ENCODE measurements at regions of chr5 and their contacts with region 1.

Region 1: DNA sequence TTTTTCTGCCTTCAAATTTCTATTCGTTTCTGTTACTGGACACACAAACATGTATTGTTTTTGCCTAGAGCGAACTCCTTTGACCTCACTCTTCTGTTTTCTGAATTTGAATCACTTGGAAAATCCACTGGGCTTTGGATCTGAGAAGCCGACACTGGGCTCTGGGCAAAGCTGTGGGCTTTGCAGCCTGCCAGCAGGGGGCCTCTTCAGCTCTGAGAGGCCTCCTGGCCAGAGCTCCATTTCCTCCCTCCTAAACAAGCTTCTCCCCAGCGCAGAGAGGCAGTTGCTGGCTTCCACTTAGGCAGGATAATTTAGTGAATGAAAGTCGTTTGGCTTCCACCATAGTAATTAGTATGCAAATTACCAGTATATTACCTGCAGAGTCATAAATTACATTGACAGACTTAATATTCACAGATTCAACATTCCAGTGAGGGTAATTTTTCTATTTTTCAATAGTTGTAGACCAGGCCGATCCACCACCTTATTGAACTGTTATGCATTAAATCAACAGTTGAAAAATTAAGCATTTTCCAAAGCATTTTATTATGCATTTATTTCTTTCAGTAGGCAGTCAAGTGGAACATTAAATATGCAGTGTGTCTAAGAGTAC is 104.0 kb upstream of the ZNF366 start:
- DNase-seq: peak; percentile 74
- H3K4me3 ChIP-seq: no peak overlapping the region
- H3K27ac ChIP-seq: no peak overlapping the region
- H3K4me1 ChIP-seq: peaks cover 0 to 24% (median 0%) of the 10 kb centered on the region in 4 donors
- H3K27me3 ChIP-seq: no peaks in the 10 kb centered on the region
- CTCF ChIP-seq: peak; percentile 83 to 95 (median 90)
- EP300 ChIP-seq: no peak
- POLR2A ChIP-seq: no peak

Region 2: GRCh38 chr5:72816311-72817145 is 205.3 kb after region 1 on chr5 and contains the start of gene TNPO1:
- in situ Hi-C with region 1: loop called in 3 of 4 experiments (anchors 10 to 25 kb)
- intact Hi-C with region 1: no loop called
- DNase-seq: peak; percentile 94
- H3K4me3 ChIP-seq: peak within 1 kb of the TSS; percentile 61 to 90 (median 86)
- H3K27ac ChIP-seq: peak within 1 kb of the TSS; percentile 98 to 99 (median 99)
- H3K4me1 ChIP-seq: peaks cover 7 to 36% (median 19%) of the 10 kb centered on the region in 4 donors
- H3K27me3 ChIP-seq: no peaks in the 10 kb centered on the region
- CTCF ChIP-seq: no peak
- EP300 ChIP-seq: no peak
- POLR2A ChIP-seq: peak; percentile 96
- total RNA-seq, gene TNPO1: 30.3 to 391 (median 102) TPM

Region 3: DNA sequence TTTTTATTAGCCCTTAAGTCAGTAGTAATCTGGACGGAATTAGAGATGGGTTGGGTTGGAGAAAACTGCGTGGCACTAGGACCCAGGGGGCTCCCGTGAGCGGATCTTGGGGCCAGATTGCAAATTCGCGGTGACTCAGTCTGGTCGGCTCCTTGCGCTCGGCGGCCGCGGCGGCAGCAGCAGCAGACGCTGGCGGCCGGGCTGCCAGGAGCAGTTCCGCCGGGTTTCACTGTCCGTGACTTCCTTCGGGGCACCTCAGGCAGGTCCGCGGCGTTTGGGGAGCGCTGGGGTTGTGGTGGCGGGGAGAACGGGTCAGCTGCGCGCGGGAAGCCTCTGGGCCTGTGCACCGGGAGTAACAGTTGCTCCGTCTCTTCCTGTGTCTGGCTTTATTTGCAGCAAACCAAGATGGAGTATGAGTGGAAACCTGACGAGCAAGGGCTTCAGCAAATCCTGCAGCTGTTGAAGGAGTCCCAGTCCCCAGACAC is 236.8 kb after region 1 on chr5:
- in situ Hi-C with region 1: loop called in 1 of 4 experiments (anchors 25 kb)
- intact Hi-C with region 1: no loop called
- DNase-seq: peak; percentile 93
- H3K4me3 ChIP-seq: peak overlapping the region; percentile 68 to 91 (median 86)
- H3K27ac ChIP-seq: peak overlapping the region; percentile 87 to 99 (median 94)
- H3K4me1 ChIP-seq: peaks cover 9 to 56% (median 38%) of the 10 kb centered on the region in 4 donors
- H3K27me3 ChIP-seq: no peaks in the 10 kb centered on the region
- CTCF ChIP-seq: peak in 2 of 5 experiments; percentile 34 to 39
- EP300 ChIP-seq: no peak
- POLR2A ChIP-seq: peak; percentile 95

Region 4: DNA sequence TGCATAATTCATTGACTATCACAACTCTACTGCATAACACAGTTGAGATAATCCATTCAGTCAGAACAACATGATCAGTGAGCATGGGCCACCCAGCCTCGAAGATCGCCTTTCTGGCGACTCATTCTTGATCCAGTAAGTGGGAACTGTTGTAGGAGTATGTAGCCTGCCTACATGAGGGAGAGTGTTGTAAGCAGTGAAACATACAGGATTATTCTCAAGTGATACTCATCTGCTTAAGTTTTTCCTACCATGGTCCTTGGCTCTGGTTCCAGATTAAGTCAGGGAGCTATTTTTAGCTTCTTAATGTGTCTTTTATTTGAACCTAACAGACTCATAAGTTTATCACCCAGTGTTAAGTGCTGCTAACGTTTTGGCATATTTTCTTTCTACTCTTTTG is 249.3 kb after region 1 on chr5:
- in situ Hi-C with region 1: no loop called
- intact Hi-C with region 1: no loop called
- DNase-seq: no peak
- H3K4me3 ChIP-seq: no peak overlapping the region
- H3K27ac ChIP-seq: no peak overlapping the region
- H3K4me1 ChIP-seq: peaks cover 0 to 19% (median 2%) of the 10 kb centered on the region in 4 donors
- H3K27me3 ChIP-seq: no peaks in the 10 kb centered on the region
- CTCF ChIP-seq: no peak
- EP300 ChIP-seq: no peak
- POLR2A ChIP-seq: no peak

Measured in transverse colon (tissue), 4 donors.